AG04449 (cell line): ENCODE measurements at regions of chr11 and their contacts with region 1.

Region 1: GRCh38 chr11:65274735-65275682 is 13.2 kb downstream of the POLA2 start:
- DNase-seq: peak; percentile 92
- H3K4me3 ChIP-seq: no peak overlapping the region
- CTCF ChIP-seq: peak; percentile 69

Region 2: GRCh38 chr11:65261591-65262380 is 13.2 kb before region 1 on chr11 and contains the start of gene POLA2:
- CTCF ChIA-PET with region 1: interaction called, 31 read pairs
- POLR2A ChIA-PET with region 1: interaction called, 7 read pairs
- DNase-seq: peak; percentile 47
- H3K4me3 ChIP-seq: peak within 1 kb of the TSS; percentile 79
- CTCF ChIP-seq: no peak

Region 3: DNA sequence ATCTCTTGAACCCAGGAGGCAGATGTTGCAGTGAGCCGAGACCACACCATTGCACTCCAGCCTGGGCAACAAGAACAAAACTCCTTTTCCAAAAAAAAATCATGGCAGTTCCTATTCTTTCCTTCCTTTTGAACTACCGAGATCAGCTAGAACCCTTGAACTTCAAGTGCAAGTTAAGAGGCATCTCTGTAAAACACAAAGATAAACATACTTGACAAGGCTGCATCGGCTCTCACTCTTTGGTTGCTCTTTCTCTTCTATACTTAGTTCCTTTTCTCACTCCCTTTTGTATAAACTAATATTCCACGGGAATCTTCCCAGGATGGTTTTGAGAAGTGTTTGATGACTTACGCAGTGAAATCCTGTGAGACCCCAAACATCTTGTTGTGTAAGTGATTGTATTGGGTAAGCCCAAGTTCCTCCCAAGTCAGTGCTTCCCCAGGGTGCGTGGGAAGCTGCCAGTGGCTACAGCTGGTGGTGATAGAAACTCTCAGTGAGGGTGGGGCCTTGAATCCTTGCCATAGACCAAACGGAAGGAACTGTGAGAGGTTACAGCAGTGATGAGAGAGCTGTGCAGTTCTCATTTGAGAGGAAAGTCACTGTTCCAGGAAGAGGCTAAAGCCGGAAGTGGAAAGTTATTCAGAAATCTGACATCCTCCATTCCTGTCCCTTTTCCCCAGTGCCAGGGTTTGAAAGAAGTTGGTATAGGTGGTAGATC is 15.6 kb after region 1 on chr11:
- CTCF ChIA-PET with region 1: interaction called, 18 read pairs
- POLR2A ChIA-PET with region 1: interaction called, 13 read pairs
- DNase-seq: peak; percentile 97
- H3K4me3 ChIP-seq: no peak overlapping the region
- CTCF ChIP-seq: no peak

Region 4: GRCh38 chr11:65766535-65766934 is 491.5 kb after region 1 on chr11:
- CTCF ChIA-PET with region 1: no interaction called
- POLR2A ChIA-PET with region 1: no interaction called
- DNase-seq: peak; percentile 21
- H3K4me3 ChIP-seq: no peak overlapping the region
- CTCF ChIP-seq: no peak